ENCODE measurements at regions of chr14 and their contacts with region 1.

Region 1: GRCh38 chr14:75577729-75578101 is 705 bp upstream of the FLVCR2 start:
- DNase-seq: peak; percentile 88
- ATAC-seq: peak; percentile 93
- H3K4me3 Mint-ChIP-seq: peak overlapping the region; percentile 77
- H3K27ac Mint-ChIP-seq: peak overlapping the region; percentile 59
- H3K4me1 Mint-ChIP-seq: peaks cover 20% of the 10 kb centered on the region
- H3K27me3 Mint-ChIP-seq: peaks cover 3% of the 10 kb centered on the region
- CTCF ChIP-seq: peak; percentile 66

Region 2: GRCh38 chr14:75479770-75480600 is 97.7 kb before region 1 on chr14:
- CTCF ChIA-PET with region 1: no interaction called
- POLR2A ChIA-PET with region 1: no interaction called
- intact Hi-C with region 1: no loop called
- DNase-seq: no peak
- ATAC-seq: no peak
- H3K4me3 Mint-ChIP-seq: no peak overlapping the region
- H3K27ac Mint-ChIP-seq: no peak overlapping the region
- H3K4me1 Mint-ChIP-seq: no peaks in the 10 kb centered on the region
- H3K27me3 Mint-ChIP-seq: peaks cover 1% of the 10 kb centered on the region
- CTCF ChIP-seq: no peak

Region 3: DNA sequence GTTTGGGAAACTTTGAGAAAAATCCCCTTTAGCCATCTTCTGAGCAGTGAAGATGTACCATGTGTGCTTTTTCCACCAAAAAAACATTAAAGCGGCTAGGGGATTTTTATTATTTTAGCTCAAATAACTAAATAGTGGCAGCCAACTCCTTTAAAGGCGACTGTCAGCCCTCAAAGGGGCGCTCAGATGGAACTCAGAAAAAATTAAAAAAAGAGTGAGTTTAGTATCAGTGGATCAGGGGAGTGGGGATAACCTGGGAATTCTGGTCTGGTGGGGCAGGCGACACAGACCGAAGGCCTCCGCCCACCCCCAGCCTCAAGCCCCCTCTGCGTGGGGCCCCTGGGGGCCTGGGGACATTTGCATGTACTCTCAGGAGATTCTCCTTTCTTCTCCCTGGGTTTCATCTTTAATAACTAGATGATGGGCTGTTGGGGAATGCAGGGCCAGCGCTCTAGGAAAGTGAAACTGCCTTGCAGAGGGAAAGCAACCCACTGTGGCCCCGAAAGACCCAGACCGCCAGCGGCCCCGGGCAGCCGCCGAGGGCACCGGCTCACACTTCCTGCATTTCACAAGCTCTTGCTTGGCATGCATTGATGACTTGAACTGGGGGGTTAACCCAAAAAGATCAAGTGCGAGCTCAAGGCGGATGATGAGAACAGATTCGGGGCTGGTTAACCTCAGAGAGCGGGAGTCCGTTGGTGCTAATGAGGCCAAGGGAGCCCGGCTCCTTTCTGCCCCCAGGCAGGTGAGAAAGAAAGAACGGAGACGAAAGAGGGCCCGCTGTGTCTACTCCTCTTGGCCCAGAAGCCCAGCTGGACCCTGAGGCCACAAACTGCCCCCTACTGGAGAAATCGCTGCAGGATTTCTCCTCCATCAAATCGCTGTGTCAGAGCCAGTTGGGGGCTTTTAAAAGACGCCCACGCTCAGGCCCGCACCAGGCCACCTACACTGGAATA is 62.8 kb before region 1 on chr14:
- CTCF ChIA-PET with region 1: interaction called, 14 read pairs
- POLR2A ChIA-PET with region 1: no interaction called
- intact Hi-C with region 1: no loop called
- DNase-seq: peak; percentile 66
- ATAC-seq: peak; percentile 67
- H3K4me3 Mint-ChIP-seq: peak overlapping the region; percentile 68
- H3K27ac Mint-ChIP-seq: peak overlapping the region; percentile 93
- H3K4me1 Mint-ChIP-seq: peaks cover 42% of the 10 kb centered on the region
- H3K27me3 Mint-ChIP-seq: no peaks in the 10 kb centered on the region
- CTCF ChIP-seq: peak; percentile 51

Region 4: GRCh38 chr14:75542588-75543091 is 35.1 kb before region 1 on chr14:
- CTCF ChIA-PET with region 1: interaction called, 15 read pairs
- POLR2A ChIA-PET with region 1: interaction called, 4 read pairs
- intact Hi-C with region 1: no loop called
- DNase-seq: peak; percentile 90
- ATAC-seq: peak; percentile 89
- H3K4me3 Mint-ChIP-seq: peak overlapping the region; percentile 54
- H3K27ac Mint-ChIP-seq: peak overlapping the region; percentile 96
- H3K4me1 Mint-ChIP-seq: peaks cover 57% of the 10 kb centered on the region
- H3K27me3 Mint-ChIP-seq: no peaks in the 10 kb centered on the region
- CTCF ChIP-seq: no peak

Region 5: DNA sequence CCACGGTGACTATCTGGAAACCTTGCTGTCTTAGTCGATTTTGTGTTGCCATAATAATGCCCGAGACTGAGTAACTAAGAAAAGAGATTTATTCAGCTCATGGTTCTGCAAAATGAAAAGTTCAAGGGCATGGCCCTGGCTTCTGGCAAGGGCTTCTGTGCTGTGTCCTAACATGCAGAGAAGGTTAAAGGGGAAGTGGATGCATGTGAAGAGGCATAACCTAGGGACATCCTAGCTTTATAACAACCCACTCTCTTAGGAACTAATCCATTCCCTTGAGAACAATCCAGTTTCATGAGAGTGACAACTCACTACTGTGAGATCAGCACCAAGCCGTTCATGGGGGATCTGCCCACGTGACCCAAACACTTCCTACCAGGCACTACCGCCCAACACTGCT is 12.2 kb after region 1 on chr14:
- CTCF ChIA-PET with region 1: interaction called, 10 read pairs
- POLR2A ChIA-PET with region 1: no interaction called
- intact Hi-C with region 1: no loop called
- DNase-seq: no peak
- ATAC-seq: no peak
- H3K4me3 Mint-ChIP-seq: no peak overlapping the region
- H3K27ac Mint-ChIP-seq: no peak overlapping the region
- H3K4me1 Mint-ChIP-seq: no peaks in the 10 kb centered on the region
- H3K27me3 Mint-ChIP-seq: no peaks in the 10 kb centered on the region
- CTCF ChIP-seq: no peak

Region 6: DNA sequence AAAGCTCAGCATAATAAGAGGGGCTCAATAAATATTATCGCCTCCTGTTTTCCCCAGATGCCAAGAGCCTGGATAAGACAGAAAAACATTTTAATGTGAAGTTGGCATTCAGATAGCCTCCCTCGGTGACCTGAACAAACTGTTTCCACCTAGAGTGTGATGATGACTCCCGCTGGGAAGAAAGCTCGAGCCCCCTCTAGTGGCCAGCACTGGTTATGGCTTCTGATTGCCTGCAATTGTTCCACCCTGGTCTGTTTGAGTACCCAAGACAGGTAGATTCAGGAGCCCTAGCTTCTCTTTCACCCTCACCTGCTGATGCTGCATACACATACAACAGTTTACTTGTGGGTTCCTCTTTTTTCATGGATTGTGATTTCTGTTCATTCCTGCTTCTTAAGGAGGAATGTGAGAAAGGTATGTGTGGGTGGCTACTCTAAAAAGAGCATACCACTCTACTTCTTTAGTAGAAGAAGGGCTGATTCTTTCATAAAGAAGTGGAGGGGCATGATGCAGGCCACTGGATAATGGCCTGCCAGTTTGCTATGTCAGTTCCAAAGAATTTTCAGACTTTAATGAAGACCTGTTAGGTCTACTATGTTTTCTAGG is 76.5 kb after region 1 on chr14:
- CTCF ChIA-PET with region 1: interaction called, 281 read pairs
- POLR2A ChIA-PET with region 1: interaction called, 5 read pairs
- intact Hi-C with region 1: loop called (anchors 1 kb)
- DNase-seq: peak; percentile 89
- ATAC-seq: peak; percentile 98
- H3K4me3 Mint-ChIP-seq: no peak overlapping the region
- H3K27ac Mint-ChIP-seq: no peak overlapping the region
- H3K4me1 Mint-ChIP-seq: peaks cover 9% of the 10 kb centered on the region
- H3K27me3 Mint-ChIP-seq: no peaks in the 10 kb centered on the region
- CTCF ChIP-seq: peak; percentile 95

Region 7: DNA sequence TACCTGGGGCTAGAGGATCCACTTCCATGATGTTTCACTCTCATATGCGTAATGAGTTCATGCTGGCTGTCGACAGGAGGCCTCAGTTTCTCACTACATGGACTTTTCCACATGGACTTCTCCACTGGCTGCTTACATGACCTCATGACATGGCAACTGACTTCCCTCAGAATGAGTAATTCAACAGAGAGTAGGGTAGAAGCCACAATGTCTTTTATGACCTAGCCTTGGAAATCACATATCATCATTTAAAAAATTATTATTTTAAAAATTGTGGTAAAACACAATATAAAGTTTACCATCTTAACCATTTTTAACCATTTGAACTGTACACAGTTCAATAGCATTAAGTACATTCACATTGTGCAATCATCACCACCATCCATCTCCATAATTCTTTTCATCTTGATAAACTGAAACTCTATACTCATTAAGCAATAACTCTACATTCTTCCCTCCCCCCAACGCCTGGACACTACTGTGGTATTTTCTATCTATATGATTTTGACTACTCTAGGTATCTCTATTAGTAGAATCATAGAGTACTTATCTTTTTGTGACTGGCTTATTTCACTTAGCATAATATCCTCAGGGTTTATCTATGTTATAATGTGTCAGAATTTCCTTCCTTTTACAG is 259.6 kb after region 1 on chr14:
- CTCF ChIA-PET with region 1: no interaction called
- POLR2A ChIA-PET with region 1: no interaction called
- intact Hi-C with region 1: no loop called
- DNase-seq: no peak
- ATAC-seq: no peak
- H3K4me3 Mint-ChIP-seq: no peak overlapping the region
- H3K27ac Mint-ChIP-seq: no peak overlapping the region
- H3K4me1 Mint-ChIP-seq: peaks cover 4% of the 10 kb centered on the region
- H3K27me3 Mint-ChIP-seq: no peaks in the 10 kb centered on the region
- CTCF ChIP-seq: no peak

Region 8: GRCh38 chr14:75861161-75861621 is 283.5 kb after region 1 on chr14:
- CTCF ChIA-PET with region 1: no interaction called
- POLR2A ChIA-PET with region 1: no interaction called
- intact Hi-C with region 1: no loop called
- DNase-seq: no peak
- ATAC-seq: no peak
- H3K4me3 Mint-ChIP-seq: no peak overlapping the region
- H3K27ac Mint-ChIP-seq: no peak overlapping the region
- H3K4me1 Mint-ChIP-seq: peaks cover 6% of the 10 kb centered on the region
- H3K27me3 Mint-ChIP-seq: no peaks in the 10 kb centered on the region
- CTCF ChIP-seq: no peak

Region 9: DNA sequence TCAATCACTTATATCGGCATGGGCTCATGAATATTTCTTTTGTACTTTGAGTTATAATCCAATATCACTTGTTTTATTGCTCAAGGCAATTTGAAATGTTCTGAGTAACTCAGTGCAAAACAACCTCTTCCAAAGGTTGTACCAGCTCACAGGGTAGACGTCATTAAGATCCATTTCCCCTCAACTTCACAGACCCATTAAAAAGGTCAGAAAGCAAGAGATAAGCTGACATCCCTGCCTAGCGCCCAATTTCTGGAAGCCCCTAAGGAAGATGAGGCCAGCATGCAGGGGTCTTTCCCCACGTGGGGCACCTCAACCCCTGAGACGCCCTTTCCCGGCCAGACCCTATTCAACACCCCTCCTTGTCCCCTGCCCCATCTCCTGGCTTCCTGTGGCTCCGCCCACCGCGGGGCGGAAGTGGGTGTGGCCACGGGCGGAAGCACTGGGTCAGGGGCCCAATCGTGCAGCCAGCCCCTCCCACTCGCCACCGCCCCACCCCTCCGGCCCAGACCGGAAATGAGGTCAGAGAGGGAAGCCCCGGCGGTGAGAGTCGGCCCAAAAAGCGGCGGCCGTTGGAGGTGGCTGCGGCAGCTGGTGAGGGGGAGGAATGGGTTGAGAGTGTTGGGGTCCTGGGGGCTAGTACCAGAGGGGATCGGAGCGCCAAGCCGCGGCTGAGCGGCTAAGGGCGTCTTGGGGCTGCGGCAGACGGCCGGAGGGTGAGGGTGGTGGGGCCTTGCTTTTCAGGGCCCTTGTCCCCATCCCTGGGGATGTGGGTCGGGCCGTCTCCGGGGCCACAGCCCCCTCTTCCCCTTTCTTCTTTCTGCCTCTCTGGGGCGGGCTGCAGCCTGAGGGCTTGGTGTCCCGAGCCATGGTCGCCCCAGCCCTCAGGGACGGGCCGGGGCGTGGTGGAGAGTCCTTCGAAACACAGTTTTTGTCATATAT is 574.0 kb after region 1 on chr14 and contains the start of gene GPATCH2L:
- CTCF ChIA-PET with region 1: no interaction called
- POLR2A ChIA-PET with region 1: no interaction called
- intact Hi-C with region 1: no loop called
- DNase-seq: peak; percentile 98
- ATAC-seq: peak; percentile 92
- H3K4me3 Mint-ChIP-seq: peak within 1 kb of the TSS; percentile 91
- H3K27ac Mint-ChIP-seq: peak within 1 kb of the TSS; percentile 97
- H3K4me1 Mint-ChIP-seq: peaks cover 45% of the 10 kb centered on the region
- H3K27me3 Mint-ChIP-seq: no peaks in the 10 kb centered on the region
- CTCF ChIP-seq: no peak
- total RNA-seq, gene GPATCH2L: 54.0 to 58.2 TPM

Measured in activated CD8-positive, alpha-beta T cell treated with anti-CD3 and anti-CD28 coated beads for 36 hours (primary cell).